ENCODE measurements at regions of chr15 and their contacts with region 1.

Region 1: DNA sequence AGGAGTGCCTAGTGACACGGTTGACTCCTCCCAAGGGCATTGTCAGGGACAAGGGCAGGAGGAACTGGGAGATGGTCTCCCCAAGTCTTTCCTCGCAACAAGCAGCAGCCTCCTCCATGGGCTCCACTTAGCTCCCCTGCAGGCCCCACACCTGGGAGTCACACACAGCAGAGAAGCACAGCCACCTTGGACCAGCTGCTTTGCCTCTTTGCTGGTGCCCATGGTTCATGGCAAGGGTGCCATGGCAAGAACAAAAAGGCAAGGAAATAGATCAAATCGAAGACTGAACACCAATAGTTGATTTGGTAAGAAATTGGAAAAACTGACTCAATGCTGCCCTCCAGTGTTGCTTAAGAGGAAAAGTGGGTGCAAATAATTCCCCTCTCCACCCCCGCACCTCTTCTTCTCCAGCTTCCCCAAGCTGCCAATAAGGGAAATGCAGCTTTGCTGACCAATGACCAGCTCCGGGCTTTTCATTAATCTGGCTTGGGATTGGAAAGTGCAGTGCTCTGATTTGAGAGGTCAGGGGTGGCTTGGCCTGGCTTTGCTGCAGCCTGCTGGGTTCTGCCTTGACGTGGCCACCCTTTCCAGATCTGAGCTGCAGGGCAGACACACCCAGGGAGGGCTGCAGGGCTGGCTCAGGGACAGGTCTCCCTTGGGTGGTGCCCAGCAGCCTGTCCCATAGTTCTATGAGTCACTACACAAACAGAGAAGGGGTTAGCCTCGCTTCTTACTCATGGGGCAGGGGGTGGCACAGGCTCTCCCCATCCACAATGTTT is 162.0 kb downstream of the KLF13 start:
- DNase-seq: peak; percentile 91 to 97
- ATAC-seq: peak; percentile 82 to 93
- H3K4me3 ChIP-seq: no peak overlapping the region
- H3K27ac ChIP-seq: peak overlapping the region; percentile 63 to 67
- H3K4me1 ChIP-seq: peaks cover 25% of the 10 kb centered on the region
- CTCF ChIP-seq: peak; percentile 95
- EP300 ChIP-seq: no peak
- POLR2A ChIP-seq: no peak
- RAD21 ChIP-seq: peak; percentile 92 to 97

Region 2: DNA sequence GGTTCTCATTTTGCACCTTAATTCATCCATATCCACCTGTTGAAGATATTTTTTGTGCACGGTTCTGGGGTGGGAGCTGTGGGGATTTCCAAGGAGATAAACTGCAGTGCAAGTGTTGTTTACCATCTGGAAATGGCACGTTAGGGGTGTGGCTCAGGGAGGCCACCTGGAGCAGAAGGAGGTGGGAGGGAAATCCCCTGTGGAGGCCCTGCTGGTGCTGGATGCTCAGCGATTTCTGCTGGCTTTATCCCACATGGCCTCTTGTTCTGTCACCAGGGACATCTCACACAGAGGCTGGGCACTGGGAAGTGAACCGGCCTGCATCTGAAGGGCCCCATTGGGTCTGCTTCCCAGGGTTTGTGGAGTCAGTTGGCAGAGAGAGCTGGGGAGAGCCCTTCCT is 411.4 kb before region 1 on chr15:
- CTCF ChIA-PET with region 1: no interaction called
- POLR2A ChIA-PET with region 1: no interaction called
- DNase-seq: no peak
- ATAC-seq: no peak
- H3K4me3 ChIP-seq: no peak overlapping the region
- H3K27ac ChIP-seq: no peak overlapping the region
- H3K4me1 ChIP-seq: peaks cover 14% of the 10 kb centered on the region
- CTCF ChIP-seq: no peak
- EP300 ChIP-seq: no peak
- POLR2A ChIP-seq: no peak
- RAD21 ChIP-seq: no peak

Region 3: GRCh38 chr15:31200735-31201151 is 287.9 kb before region 1 on chr15:
- CTCF ChIA-PET with region 1: interaction called, 67 read pairs
- POLR2A ChIA-PET with region 1: no interaction called
- DNase-seq: peak; percentile 66 to 75
- ATAC-seq: peak; percentile 77 to 89
- H3K4me3 ChIP-seq: no peak overlapping the region
- H3K27ac ChIP-seq: peak overlapping the region in 1 of 2 experiments; percentile 30; a peak in 2 of 6 replicates
- H3K4me1 ChIP-seq: no peaks in the 10 kb centered on the region
- CTCF ChIP-seq: peak; percentile 62
- EP300 ChIP-seq: no peak
- POLR2A ChIP-seq: no peak
- RAD21 ChIP-seq: peak; percentile 82 to 86

Region 4: DNA sequence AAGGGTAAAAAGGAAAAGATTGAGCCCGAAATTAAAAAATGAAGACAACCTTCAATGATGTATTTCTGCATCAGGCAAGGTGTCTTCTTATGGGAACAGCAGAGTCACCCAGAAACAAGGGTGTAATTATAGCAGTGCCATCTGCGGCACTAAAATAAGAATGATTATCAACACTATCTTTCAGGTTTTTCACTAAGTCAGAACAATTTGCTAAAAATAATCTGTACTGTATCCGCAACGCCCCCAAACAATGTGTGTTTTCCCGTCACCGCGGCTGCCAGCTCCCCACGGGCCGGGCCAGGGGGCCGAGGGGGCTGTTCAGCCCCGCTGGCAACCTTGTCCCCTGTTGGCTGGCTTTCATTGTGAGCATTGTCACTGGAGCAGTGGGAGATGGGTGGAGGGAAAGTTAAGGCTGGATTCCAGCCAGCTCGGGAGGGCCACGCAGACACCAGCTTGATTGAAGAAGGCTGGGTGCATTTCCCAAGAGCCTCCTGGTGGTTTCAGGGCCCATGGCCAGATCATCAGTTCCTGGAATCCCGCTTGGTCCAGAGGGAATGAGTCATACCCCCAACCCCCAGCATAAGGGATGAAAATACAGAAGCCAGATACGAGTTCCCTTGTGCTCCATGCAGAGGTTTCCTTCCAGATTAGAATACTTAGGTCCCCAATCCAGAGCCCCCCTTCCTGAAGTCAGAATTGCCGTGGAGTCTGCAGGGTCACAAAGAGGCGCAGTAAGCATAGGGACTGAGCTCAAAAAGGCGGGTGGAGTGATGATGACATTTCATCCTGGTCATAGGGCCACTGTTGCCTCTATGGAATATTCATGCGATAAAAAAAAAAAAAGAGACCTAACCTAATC is 252.2 kb before region 1 on chr15:
- CTCF ChIA-PET with region 1: interaction called, 11 read pairs
- POLR2A ChIA-PET with region 1: no interaction called
- DNase-seq: peak; percentile 85 to 93
- ATAC-seq: peak; percentile 94 to 95
- H3K4me3 ChIP-seq: no peak overlapping the region
- H3K27ac ChIP-seq: peak overlapping the region; percentile 71 to 89
- H3K4me1 ChIP-seq: peaks cover 23% of the 10 kb centered on the region
- CTCF ChIP-seq: no peak
- EP300 ChIP-seq: peak in 1 of 2 experiments; percentile 33; a peak in 2 of 5 replicates
- POLR2A ChIP-seq: no peak
- RAD21 ChIP-seq: peak in 1 of 2 experiments; percentile 41; a peak in 2 of 5 replicates

Region 5: DNA sequence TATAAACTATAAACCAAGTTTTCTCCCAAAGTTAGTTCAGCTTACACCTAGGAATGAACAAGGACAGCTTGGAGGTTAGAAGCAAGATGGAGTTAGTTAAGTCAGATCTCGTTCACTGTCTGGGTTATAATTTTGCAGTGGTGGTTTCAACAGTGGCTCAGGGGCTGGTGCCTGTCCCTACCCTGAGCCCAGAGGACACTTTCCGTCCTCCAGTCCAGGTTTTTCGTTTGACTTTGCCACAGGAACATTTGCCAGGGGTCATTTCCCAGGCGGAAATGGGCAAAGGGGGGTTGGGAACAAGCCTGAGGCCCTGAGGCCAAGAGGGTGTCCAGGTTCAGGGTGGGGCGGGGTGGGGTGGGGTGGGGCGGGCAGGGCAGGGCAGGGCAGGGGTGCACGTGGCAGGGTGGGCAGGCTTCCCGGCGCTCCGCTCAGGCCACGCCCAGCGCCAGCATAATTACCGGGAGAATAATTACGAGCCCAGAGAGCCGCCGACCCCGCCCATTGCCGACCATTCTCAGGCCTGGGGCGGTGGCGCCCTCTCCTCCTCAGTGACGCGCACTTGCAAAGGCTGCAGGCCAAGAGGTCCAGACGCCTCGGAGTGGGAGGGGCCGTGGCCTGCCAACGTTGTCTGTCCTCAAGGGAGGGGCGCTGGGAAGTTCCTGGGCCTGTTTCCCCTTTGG is 91.6 kb before region 1 on chr15:
- CTCF ChIA-PET with region 1: interaction called, 16 read pairs
- POLR2A ChIA-PET with region 1: no interaction called
- DNase-seq: peak; percentile 76 to 92
- ATAC-seq: peak; percentile 77 to 89
- H3K4me3 ChIP-seq: peak overlapping the region; percentile 29; the same call in 2 of the 3 replicates
- H3K27ac ChIP-seq: peak overlapping the region; percentile 75 to 90
- H3K4me1 ChIP-seq: peaks cover 41% of the 10 kb centered on the region
- CTCF ChIP-seq: peak; percentile 15; the same call in 1 of the 3 replicates
- EP300 ChIP-seq: 0 out of 5 replicates have a peak, but pooled peaks of 1 of the 2 experiments have one; percentile 46
- POLR2A ChIP-seq: peak; percentile 36
- RAD21 ChIP-seq: peak; percentile 12 to 54; a peak in 1 of 5 replicates

Region 6: DNA sequence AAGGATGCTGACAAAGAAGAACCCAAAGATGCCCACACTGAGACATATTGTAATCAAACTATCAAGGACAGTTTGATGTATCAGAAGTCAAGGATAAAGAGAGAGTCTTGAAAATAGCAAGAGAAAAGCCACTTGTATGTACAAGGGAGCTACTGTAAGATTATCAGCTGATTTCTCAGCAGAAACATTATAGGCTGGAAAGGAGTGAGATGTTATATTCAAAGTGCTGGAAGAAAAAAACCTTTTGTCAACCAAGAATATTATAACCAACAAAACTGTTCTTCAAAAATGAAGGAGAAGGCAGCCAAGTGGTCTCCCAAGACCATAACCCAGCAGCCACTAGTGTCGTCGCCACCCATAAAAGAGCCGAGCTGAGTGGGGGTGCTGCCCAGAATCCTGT is 68.8 kb before region 1 on chr15:
- CTCF ChIA-PET with region 1: interaction called, 10 read pairs
- POLR2A ChIA-PET with region 1: no interaction called
- DNase-seq: no peak
- ATAC-seq: no peak
- H3K4me3 ChIP-seq: no peak overlapping the region
- H3K27ac ChIP-seq: no peak overlapping the region
- H3K4me1 ChIP-seq: no peaks in the 10 kb centered on the region
- CTCF ChIP-seq: no peak
- EP300 ChIP-seq: no peak
- POLR2A ChIP-seq: no peak
- RAD21 ChIP-seq: no peak

Region 7: GRCh38 chr15:31448635-31448979 is 40.0 kb before region 1 on chr15:
- CTCF ChIA-PET with region 1: interaction called, 254 read pairs
- POLR2A ChIA-PET with region 1: no interaction called
- DNase-seq: no peak
- ATAC-seq: no peak
- H3K4me3 ChIP-seq: no peak overlapping the region
- H3K27ac ChIP-seq: no peak overlapping the region
- H3K4me1 ChIP-seq: peaks cover 6% of the 10 kb centered on the region
- CTCF ChIP-seq: no peak
- EP300 ChIP-seq: no peak
- POLR2A ChIP-seq: no peak
- RAD21 ChIP-seq: no peak

Region 8: GRCh38 chr15:31499953-31500765 is 11.5 kb after region 1 on chr15:
- CTCF ChIA-PET with region 1: interaction called, 77 read pairs
- POLR2A ChIA-PET with region 1: no interaction called
- DNase-seq: no peak
- ATAC-seq: no peak
- H3K4me3 ChIP-seq: no peak overlapping the region
- H3K27ac ChIP-seq: no peak overlapping the region
- H3K4me1 ChIP-seq: no peaks in the 10 kb centered on the region
- CTCF ChIP-seq: no peak
- EP300 ChIP-seq: no peak
- POLR2A ChIP-seq: no peak
- RAD21 ChIP-seq: no peak

Region 9: GRCh38 chr15:31571671-31572070 is 83.1 kb after region 1 on chr15:
- CTCF ChIA-PET with region 1: no interaction called
- POLR2A ChIA-PET with region 1: no interaction called
- DNase-seq: peak in 1 of 2 experiments; percentile 18
- ATAC-seq: peak; percentile 68 to 87
- H3K4me3 ChIP-seq: no peak overlapping the region
- H3K27ac ChIP-seq: no peak overlapping the region
- H3K4me1 ChIP-seq: no peaks in the 10 kb centered on the region
- CTCF ChIP-seq: peak; percentile 43; the same call in 2 of the 3 replicates
- EP300 ChIP-seq: no peak
- POLR2A ChIP-seq: no peak
- RAD21 ChIP-seq: peak; percentile 50; a peak in 4 of 5 replicates